Gastrocnemius medialis (tissue), 4 donors: ENCODE measurements at regions of chr5 and their contacts with region 1.

Region 1: DNA sequence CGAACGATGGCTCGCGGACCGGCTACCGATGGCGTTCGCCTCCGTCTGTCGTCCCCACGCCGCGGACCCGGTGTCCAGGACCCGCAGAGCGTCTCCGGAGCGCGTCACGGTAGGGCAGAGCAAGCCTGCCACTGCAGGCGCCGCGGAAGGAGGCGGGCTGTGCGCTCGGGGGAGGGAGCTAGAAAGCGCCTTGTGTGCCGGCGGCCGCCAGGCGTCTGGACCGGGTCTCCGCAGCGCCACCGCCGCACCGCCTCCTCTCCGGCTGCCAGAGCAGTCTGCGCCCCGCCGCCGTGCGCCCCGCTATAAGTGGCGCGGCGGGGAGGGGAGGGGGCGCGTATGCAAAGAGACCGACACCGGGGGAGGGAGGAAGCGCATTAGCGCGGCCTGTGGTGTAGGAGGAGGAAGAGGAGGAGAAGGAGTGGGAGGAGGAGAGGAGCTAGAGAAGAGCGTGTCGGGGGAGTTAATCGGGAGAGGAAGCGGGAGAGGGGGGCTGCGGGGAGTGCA is at the start of gene ENC1:
- DNase-seq: peak; percentile 55 to 67
- ATAC-seq: peak; percentile 79 to 81
- H3K4me3 ChIP-seq: peak within 1 kb of the TSS; percentile 66 to 95 (median 70)
- H3K27ac ChIP-seq: peak within 1 kb of the TSS; percentile 69 to 83 (median 78)
- H3K4me1 ChIP-seq: peaks cover 23 to 28% of the 10 kb centered on the region in 2 donors
- H3K27me3 ChIP-seq: no peaks in the 10 kb centered on the region
- CTCF ChIP-seq: peak; percentile 52 to 78 (median 60)
- POLR2A ChIP-seq: peak; percentile 32 to 54
- total RNA-seq, gene ENC1: 2.2 to 3.4 (median 2.5) TPM

Region 2: DNA sequence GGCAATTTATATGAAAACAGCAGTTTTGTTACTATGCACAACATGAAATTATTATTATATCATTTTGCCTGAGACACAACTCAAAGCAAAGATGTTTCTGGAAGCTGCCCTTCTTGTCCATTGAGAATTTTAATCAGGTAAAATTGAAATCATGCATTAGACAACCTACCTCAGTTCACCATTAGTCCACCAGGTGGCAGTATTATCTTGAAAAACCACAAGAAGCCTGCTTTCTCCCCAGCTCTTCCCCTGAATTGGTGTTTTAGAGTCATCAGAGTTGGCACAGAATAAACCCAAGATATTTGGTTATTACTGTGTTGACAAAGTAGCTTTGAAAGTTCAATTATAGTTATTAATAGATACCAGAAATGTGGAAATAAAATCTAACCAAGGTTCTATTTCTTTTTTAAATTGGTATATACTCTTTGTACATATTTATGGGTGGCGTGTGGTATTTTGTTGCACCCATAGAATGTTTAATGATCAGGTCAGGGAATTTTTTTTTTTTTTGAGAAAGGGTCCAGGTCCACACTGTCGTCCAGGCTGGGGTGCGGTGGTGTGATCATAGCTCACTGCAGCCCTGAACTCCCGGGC is 1049.3 kb before region 1 on chr5:
- in situ Hi-C with region 1: loop called in 1 of 4 experiments (anchors 10 kb)
- intact Hi-C with region 1: no loop called
- DNase-seq: peak in 1 of 2 donors; percentile 35
- ATAC-seq: peak; percentile 70 to 83
- H3K4me3 ChIP-seq: no peak overlapping the region
- H3K27ac ChIP-seq: no peak overlapping the region
- H3K4me1 ChIP-seq: no peaks in the 10 kb centered on the region
- H3K27me3 ChIP-seq: no peaks in the 10 kb centered on the region
- CTCF ChIP-seq: peak; percentile 72 to 91 (median 79)
- POLR2A ChIP-seq: no peak

Region 3: DNA sequence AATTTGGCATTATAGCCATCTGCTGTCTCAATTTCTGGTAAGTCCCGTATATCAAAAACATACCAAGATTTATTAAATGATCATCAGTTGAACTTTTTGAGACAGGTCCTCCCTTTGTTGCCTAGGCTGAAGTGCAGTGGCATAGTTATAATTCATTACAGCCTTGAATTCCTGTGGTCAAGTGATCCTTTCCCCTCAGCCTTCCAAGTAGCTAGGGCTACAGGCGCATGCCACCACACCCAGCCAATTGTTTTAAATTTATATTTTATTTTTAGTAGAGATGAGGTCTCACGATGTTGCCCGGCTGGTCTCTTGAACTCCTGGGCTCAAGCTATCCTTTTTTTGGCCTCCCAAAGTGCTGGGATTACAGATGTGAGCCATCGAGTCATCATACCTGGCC is 595.6 kb before region 1 on chr5:
- in situ Hi-C with region 1: loop called in 2 of 4 experiments (anchors 5 to 25 kb)
- intact Hi-C with region 1: no loop called
- DNase-seq: no peak
- ATAC-seq: no peak
- H3K4me3 ChIP-seq: no peak overlapping the region
- H3K27ac ChIP-seq: no peak overlapping the region
- H3K4me1 ChIP-seq: no peaks in the 10 kb centered on the region
- H3K27me3 ChIP-seq: no peaks in the 10 kb centered on the region
- CTCF ChIP-seq: no peak
- POLR2A ChIP-seq: no peak

Region 4: DNA sequence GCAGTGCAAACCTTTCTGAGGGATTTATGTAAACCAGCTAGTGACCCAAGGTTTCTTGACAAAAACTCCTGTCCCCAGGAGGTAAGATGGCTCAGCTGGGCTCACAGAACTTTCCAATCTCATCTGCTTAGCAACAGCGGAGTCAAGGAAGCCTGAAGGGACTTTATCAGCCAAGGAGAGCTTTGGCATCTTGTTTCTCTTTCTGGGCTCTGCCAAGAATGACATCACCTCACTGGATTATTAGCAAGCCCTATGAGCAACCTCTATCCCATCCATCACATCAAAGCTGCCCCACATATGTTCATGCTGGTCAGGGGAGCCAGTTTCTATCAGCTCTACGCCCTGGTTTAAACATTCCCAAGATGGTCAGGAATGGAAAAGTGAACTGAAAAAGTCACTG is 461.3 kb before region 1 on chr5:
- in situ Hi-C with region 1: loop called in 1 of 4 experiments (anchors 25 kb)
- intact Hi-C with region 1: no loop called
- DNase-seq: no peak
- ATAC-seq: peak; percentile 44 to 60
- H3K4me3 ChIP-seq: no peak overlapping the region
- H3K27ac ChIP-seq: no peak overlapping the region
- H3K4me1 ChIP-seq: peaks cover 14 to 15% of the 10 kb centered on the region in 2 donors
- H3K27me3 ChIP-seq: no peaks in the 10 kb centered on the region
- CTCF ChIP-seq: no peak
- POLR2A ChIP-seq: no peak

Region 5: GRCh38 chr5:74288448-74289108 is 351.9 kb before region 1 on chr5:
- in situ Hi-C with region 1: loop called in 1 of 4 experiments (anchors 25 kb)
- intact Hi-C with region 1: loop called (anchors 2 kb)
- DNase-seq: peak; percentile 62 to 75
- ATAC-seq: peak; percentile 90 to 91
- H3K4me3 ChIP-seq: no peak overlapping the region
- H3K27ac ChIP-seq: peak overlapping the region; percentile 75 to 89 (median 77)
- H3K4me1 ChIP-seq: peaks cover 38 to 67% of the 10 kb centered on the region in 2 donors
- H3K27me3 ChIP-seq: no peaks in the 10 kb centered on the region
- CTCF ChIP-seq: no peak
- POLR2A ChIP-seq: no peak

Region 6: GRCh38 chr5:74408150-74409043 is 232.1 kb before region 1 on chr5:
- in situ Hi-C with region 1: loop called in 2 of 4 experiments (anchors 5 to 25 kb)
- intact Hi-C with region 1: loop called (anchors 2 kb)
- DNase-seq: no peak
- ATAC-seq: no peak
- H3K4me3 ChIP-seq: no peak overlapping the region
- H3K27ac ChIP-seq: peak overlapping the region in 2 of 4 donors; percentile 22 to 65
- H3K4me1 ChIP-seq: peaks cover 52 to 65% of the 10 kb centered on the region in 2 donors
- H3K27me3 ChIP-seq: no peaks in the 10 kb centered on the region
- CTCF ChIP-seq: no peak
- POLR2A ChIP-seq: no peak

Region 7: GRCh38 chr5:74679966-74680365 is 39.5 kb after region 1 on chr5:
- in situ Hi-C with region 1: no loop called
- intact Hi-C with region 1: no loop called
- DNase-seq: no peak
- ATAC-seq: no peak
- H3K4me3 ChIP-seq: no peak overlapping the region
- H3K27ac ChIP-seq: no peak overlapping the region
- H3K4me1 ChIP-seq: no peaks in the 10 kb centered on the region
- H3K27me3 ChIP-seq: no peaks in the 10 kb centered on the region
- CTCF ChIP-seq: no peak
- POLR2A ChIP-seq: no peak